Panc1 (cell line): ENCODE measurements at regions of chr5 and their contacts with region 1.

Region 1: GRCh38 chr5:108747774-108748400 is at the start of gene FER:
- DNase-seq: no peak
- ATAC-seq: no peak
- H3K4me3 ChIP-seq: peak within 1 kb of the TSS; percentile 93 to 97
- H3K27ac ChIP-seq: peak within 1 kb of the TSS; percentile 99
- H3K4me1 ChIP-seq: peaks cover 13% of the 10 kb centered on the region
- H3K27me3 ChIP-seq: no peaks in the 10 kb centered on the region
- CTCF ChIP-seq: no peak
- total RNA-seq, gene FER: 22.1 TPM

Region 2: DNA sequence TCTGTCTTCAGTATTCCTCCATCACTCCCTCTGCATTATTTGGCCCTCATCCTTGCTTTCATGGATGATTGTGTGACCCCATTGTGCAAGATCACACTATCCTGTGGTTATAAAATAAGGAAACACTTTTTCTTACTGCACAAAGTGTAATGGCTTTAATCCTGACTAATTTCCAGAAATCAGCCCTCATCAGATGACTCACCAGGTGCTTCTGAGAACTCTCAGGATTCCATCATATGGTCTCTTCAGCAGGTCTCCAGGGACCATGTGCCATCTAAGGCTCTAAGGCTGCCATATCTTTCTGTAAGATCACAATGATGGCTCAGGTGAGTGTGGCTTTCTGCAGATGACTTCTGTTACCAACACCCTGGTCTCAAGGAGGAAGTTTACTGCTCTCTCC is 27.5 kb before region 1 on chr5:
- CTCF ChIA-PET with region 1: no interaction called
- POLR2A ChIA-PET with region 1: no interaction called
- in situ Hi-C with region 1: no loop called
- intact Hi-C with region 1: loop called (anchors 1 kb)
- DNase-seq: no peak
- ATAC-seq: no peak
- H3K4me3 ChIP-seq: no peak overlapping the region
- H3K27ac ChIP-seq: no peak overlapping the region
- H3K4me1 ChIP-seq: no peaks in the 10 kb centered on the region
- H3K27me3 ChIP-seq: no peaks in the 10 kb centered on the region; the same call in 1 of the 2 replicates
- CTCF ChIP-seq: no peak

Region 3: GRCh38 chr5:109584986-109585599 is 837.2 kb after region 1 on chr5:
- CTCF ChIA-PET with region 1: no interaction called
- POLR2A ChIA-PET with region 1: no interaction called
- in situ Hi-C with region 1: no loop called
- intact Hi-C with region 1: no loop called
- DNase-seq: no peak
- ATAC-seq: no peak
- H3K4me3 ChIP-seq: no peak overlapping the region
- H3K27ac ChIP-seq: no peak overlapping the region
- H3K4me1 ChIP-seq: no peaks in the 10 kb centered on the region
- H3K27me3 ChIP-seq: no peaks in the 10 kb centered on the region
- CTCF ChIP-seq: no peak